B cell (primary cell): ENCODE measurements at regions of chr5 and their contacts with region 1.

Region 1: GRCh38 chr5:180784497-180785097 is 18.0 kb downstream of the MGAT1 start:
- DNase-seq: peak; percentile 80
- ATAC-seq: peak; percentile 92
- H3K4me3 ChIP-seq: no peak overlapping the region
- H3K4me3 Mint-ChIP-seq: no peak overlapping the region
- H3K27ac ChIP-seq: no peak overlapping the region
- H3K27ac Mint-ChIP-seq: no peak overlapping the region
- H3K4me1 ChIP-seq: no peaks in the 10 kb centered on the region
- H3K4me1 Mint-ChIP-seq: peaks cover 12% of the 10 kb centered on the region
- H3K27me3 ChIP-seq: no peaks in the 10 kb centered on the region
- H3K27me3 Mint-ChIP-seq: no peaks in the 10 kb centered on the region
- CTCF ChIP-seq: peak; percentile 79

Region 2: DNA sequence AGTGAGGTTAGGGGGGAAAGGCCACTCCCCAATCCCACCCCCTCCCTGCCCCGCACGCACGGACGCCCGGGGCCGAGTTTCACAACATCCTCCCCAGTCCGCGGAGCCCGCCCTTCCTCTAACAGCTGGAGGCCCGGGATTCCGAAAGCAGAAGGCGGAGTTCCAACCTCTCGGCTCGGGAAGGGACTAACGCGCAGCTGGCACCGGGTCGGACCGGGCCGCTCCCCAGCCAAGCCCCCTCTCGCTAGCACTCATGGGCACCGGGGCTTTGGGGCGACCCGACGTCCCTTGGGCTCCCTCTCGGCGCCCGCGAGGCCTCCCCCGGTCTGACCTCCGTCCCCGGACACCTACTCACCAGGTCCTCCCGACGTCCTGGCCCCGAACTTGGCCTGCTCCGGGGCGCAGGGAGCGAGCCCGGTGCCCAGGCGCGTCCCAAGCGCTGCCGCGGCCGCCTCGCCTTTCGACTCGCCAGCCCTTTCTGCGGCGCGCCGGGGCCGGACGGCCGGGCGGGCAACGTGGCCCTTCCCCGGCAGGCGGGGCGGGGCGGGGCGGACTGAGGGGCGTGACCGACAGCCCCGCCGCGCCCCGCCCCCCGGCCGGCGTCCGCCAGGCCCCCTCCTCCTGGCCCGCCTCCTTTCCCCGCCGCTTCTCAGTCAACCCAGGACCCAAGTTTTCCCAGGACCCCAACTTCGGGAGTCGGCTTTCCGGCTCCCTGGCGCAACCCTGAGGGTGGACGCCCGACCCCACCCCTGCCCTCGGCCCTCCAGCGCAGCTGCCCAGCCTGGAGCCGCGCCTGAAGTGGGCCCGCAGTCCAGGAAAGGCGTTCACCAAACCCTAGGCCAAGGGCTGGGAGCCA is 18.0 kb after region 1 on chr5 and contains the start of gene MGAT1:
- CTCF ChIA-PET with region 1: interaction called, 7 read pairs
- POLR2A ChIA-PET with region 1: no interaction called
- intact Hi-C with region 1: loop called (anchors 2 kb)
- DNase-seq: peak; percentile 82
- ATAC-seq: peak; percentile 65
- H3K4me3 ChIP-seq: peak within 1 kb of the TSS; percentile 82 to 96 (median 90)
- H3K4me3 Mint-ChIP-seq: peak within 1 kb of the TSS; percentile 96
- H3K27ac ChIP-seq: peak within 1 kb of the TSS; percentile 81 to 90
- H3K27ac Mint-ChIP-seq: peak within 1 kb of the TSS; percentile 87
- H3K4me1 ChIP-seq: peaks cover 80 to 83% of the 10 kb centered on the region in 2 donors
- H3K4me1 Mint-ChIP-seq: peaks cover 84% of the 10 kb centered on the region
- H3K27me3 ChIP-seq: no peaks in the 10 kb centered on the region
- H3K27me3 Mint-ChIP-seq: no peaks in the 10 kb centered on the region
- CTCF ChIP-seq: no peak
- total RNA-seq, gene MGAT1: 140 and 144 TPM in 2 replicates

Region 3: GRCh38 chr5:180810210-180810958 is 25.8 kb after region 1 on chr5:
- CTCF ChIA-PET with region 1: interaction called, 9 read pairs
- POLR2A ChIA-PET with region 1: interaction called, 5 read pairs
- intact Hi-C with region 1: loop called (anchors 2 kb)
- DNase-seq: peak; percentile 99
- ATAC-seq: peak; percentile 82
- H3K4me3 ChIP-seq: peak overlapping the region; percentile 47 to 94 (median 71)
- H3K4me3 Mint-ChIP-seq: peak overlapping the region; percentile 88
- H3K27ac ChIP-seq: peak overlapping the region; percentile 81 to 91
- H3K27ac Mint-ChIP-seq: peak overlapping the region; percentile 95
- H3K4me1 ChIP-seq: peaks cover 52 to 60% of the 10 kb centered on the region in 2 donors
- H3K4me1 Mint-ChIP-seq: peaks cover 67% of the 10 kb centered on the region
- H3K27me3 ChIP-seq: no peaks in the 10 kb centered on the region
- H3K27me3 Mint-ChIP-seq: no peaks in the 10 kb centered on the region
- CTCF ChIP-seq: no peak

Region 4: DNA sequence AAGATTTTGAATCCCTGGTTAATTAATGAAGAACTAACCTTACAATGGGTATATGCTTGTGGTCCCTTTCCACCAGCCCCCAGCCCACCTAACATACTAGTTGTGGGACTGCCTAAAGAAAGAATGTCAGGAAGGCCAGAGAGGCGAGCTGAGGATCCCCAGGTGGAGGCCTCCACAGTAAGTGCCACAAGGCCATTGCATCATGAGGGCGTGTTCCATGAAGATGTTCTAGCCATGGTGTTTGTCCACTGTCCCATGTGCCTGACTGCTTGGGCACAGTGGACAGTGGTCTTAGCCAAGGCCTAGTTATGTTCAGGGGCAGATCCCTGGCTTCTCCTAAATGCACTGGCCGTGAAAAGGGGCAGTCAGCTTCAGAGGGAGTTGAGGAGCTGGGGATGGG is 55.3 kb after region 1 on chr5:
- CTCF ChIA-PET with region 1: no interaction called
- POLR2A ChIA-PET with region 1: no interaction called
- intact Hi-C with region 1: no loop called
- DNase-seq: no peak
- ATAC-seq: no peak
- H3K4me3 ChIP-seq: no peak overlapping the region
- H3K4me3 Mint-ChIP-seq: no peak overlapping the region
- H3K27ac ChIP-seq: no peak overlapping the region
- H3K27ac Mint-ChIP-seq: no peak overlapping the region
- H3K4me1 ChIP-seq: peaks cover 0 to 2% of the 10 kb centered on the region in 2 donors
- H3K4me1 Mint-ChIP-seq: peaks cover under 1% of the 10 kb centered on the region
- H3K27me3 ChIP-seq: no peaks in the 10 kb centered on the region
- H3K27me3 Mint-ChIP-seq: no peaks in the 10 kb centered on the region
- CTCF ChIP-seq: no peak

Region 5: GRCh38 chr5:180868960-180869359 is 84.4 kb after region 1 on chr5:
- CTCF ChIA-PET with region 1: interaction called, 26 read pairs
- POLR2A ChIA-PET with region 1: interaction called, 3 read pairs
- intact Hi-C with region 1: loop called (anchors 2 kb)
- DNase-seq: peak; percentile 67
- ATAC-seq: peak; percentile 53
- H3K4me3 ChIP-seq: no peak overlapping the region
- H3K4me3 Mint-ChIP-seq: no peak overlapping the region
- H3K27ac ChIP-seq: no peak overlapping the region
- H3K27ac Mint-ChIP-seq: peak overlapping the region; percentile 11
- H3K4me1 ChIP-seq: no peaks in the 10 kb centered on the region
- H3K4me1 Mint-ChIP-seq: peaks cover 5% of the 10 kb centered on the region
- H3K27me3 ChIP-seq: no peaks in the 10 kb centered on the region
- H3K27me3 Mint-ChIP-seq: peaks cover 22% of the 10 kb centered on the region
- CTCF ChIP-seq: peak; percentile 71

Region 6: GRCh38 chr5:181052672-181053487 is 268.3 kb after region 1 on chr5:
- CTCF ChIA-PET with region 1: interaction called, 3 read pairs
- POLR2A ChIA-PET with region 1: no interaction called
- intact Hi-C with region 1: loop called (anchors 10 kb)
- DNase-seq: peak; percentile 39
- ATAC-seq: peak; percentile 25
- H3K4me3 ChIP-seq: peak overlapping the region in 4 of 5 experiments; percentile 26 to 63 (median 50)
- H3K4me3 Mint-ChIP-seq: peak overlapping the region; percentile 91
- H3K27ac ChIP-seq: peak overlapping the region in 1 of 2 donors; percentile 2
- H3K27ac Mint-ChIP-seq: peak overlapping the region; percentile 89
- H3K4me1 ChIP-seq: peaks cover 28 to 47% of the 10 kb centered on the region in 2 donors
- H3K4me1 Mint-ChIP-seq: peaks cover 53% of the 10 kb centered on the region
- H3K27me3 ChIP-seq: peaks cover 0 to 75% (median 36%) of the 10 kb centered on the region in 4 experiments
- H3K27me3 Mint-ChIP-seq: peaks cover 53% of the 10 kb centered on the region
- CTCF ChIP-seq: no peak

Region 7: DNA sequence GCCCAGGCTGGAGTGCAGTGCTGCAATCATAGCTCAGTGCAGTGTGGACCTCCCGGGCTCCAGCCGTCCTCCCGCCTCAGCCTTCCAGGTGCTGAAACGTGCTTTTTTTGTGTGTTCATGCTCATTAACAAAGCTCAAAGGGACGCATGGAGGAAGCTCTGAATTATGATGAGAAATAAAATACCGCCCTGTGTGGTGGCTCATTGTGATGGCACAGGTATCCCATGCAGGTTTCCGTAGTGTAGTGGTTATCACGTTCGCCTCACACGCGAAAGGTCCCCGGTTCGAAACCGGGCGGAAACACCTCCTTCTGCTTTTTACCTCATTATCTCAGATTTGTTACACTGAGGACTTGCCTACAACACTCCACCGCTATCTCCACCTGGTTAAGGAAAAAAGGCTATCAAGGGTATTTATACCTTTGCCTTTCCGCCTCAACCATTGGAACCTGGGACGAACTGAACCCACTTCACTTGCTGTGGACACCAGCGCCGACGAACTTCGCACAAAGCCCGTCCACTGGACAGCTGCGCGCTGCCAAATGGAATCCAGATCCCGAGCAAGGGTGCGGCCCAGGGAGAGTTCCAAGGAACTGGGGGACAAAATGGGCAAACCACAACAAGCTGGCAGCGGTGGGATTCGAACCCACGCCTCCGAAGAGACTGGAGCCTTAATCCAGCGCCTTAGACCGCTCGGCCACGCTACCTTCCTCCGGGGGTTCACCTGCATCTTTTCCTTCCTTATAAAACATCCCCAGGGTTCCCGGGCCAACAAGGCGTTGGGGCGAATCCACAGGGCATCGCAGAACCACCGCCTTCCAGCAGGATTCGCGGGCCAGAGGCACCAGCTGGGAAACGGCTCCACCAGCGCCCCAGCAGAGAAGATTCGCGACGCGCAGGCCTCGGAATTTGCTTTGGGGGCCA is 389.1 kb after region 1 on chr5:
- CTCF ChIA-PET with region 1: interaction called, 6 read pairs
- POLR2A ChIA-PET with region 1: no interaction called
- intact Hi-C with region 1: loop called (anchors 5 kb)
- DNase-seq: peak; percentile 79
- ATAC-seq: peak; percentile 69
- H3K4me3 ChIP-seq: peak overlapping the region in 4 of 5 experiments; percentile 18 to 52 (median 34)
- H3K4me3 Mint-ChIP-seq: peak overlapping the region; percentile 85
- H3K27ac ChIP-seq: no peak overlapping the region
- H3K27ac Mint-ChIP-seq: peak overlapping the region; percentile 86
- H3K4me1 ChIP-seq: peaks cover 27 to 29% of the 10 kb centered on the region in 2 donors
- H3K4me1 Mint-ChIP-seq: peaks cover 29% of the 10 kb centered on the region
- H3K27me3 ChIP-seq: peaks cover 0 to 54% (median 16%) of the 10 kb centered on the region in 4 experiments
- H3K27me3 Mint-ChIP-seq: peaks cover 28% of the 10 kb centered on the region
- CTCF ChIP-seq: peak; percentile 2